Left cardiac atrium (tissue), 4 donors: ENCODE measurements at regions of chr2 and their contacts with region 1.

Region 1: DNA sequence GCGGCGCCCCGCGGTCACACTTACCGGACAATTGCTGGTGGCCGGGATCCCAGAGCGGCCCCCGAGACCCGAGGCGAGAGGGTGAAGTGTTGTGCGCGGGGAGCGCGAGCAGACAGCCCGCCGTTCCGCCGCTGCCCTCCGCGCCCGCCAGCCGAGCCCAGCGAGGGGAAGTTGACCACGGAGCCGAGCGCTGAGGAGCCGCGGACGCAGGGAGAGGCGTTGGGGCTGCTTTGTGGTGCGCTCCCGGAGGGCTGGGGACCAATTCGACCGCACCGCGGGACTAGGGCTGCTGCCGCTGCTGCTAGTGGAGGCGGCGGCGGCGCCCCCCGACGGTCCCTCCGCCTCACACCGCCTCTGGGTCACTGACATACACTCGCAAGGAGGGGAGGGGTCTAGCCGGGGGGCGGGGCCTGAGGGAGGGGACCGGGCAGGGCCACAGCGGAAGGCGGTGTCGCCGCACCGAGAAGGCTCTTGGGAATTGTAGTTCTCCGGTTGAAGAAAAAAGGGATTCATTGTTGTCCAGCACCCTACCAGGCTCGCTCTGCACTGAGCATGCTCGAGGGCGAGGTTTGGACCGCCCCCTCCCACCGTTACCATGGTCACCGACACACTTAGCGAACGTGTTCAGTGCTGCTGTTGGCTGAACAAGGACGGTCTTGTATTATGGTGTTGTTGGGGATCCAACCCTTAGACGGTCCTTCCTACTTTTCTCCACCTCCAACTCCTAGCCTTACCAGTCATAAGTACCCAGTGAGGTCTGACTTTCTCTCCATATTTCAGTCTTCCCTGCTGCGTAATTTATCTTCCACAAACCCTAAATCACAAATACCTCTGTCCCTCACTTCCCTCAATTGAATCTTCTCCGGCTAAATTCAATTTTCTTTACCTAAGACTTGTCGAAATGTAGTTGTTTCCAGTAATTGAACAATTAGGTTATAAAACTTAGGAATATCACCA is at the start of gene PELI1:
- DNase-seq: peak; percentile 97
- ATAC-seq: peak; percentile 99
- total RNA-seq, gene PELI1: 14.8 to 16.8 TPM

Region 2: GRCh38 chr2:62660582-62661262 is 1483.6 kb before region 1 on chr2:
- intact Hi-C with region 1: no loop called
- DNase-seq: no peak
- ATAC-seq: no peak

Region 3: GRCh38 chr2:64228126-64228678 is 83.9 kb after region 1 on chr2:
- intact Hi-C with region 1: loop called in 1 of 2 experiments (anchors 10 kb)
- DNase-seq: peak; percentile 91
- ATAC-seq: peak; percentile 96 to 98

Region 4: DNA sequence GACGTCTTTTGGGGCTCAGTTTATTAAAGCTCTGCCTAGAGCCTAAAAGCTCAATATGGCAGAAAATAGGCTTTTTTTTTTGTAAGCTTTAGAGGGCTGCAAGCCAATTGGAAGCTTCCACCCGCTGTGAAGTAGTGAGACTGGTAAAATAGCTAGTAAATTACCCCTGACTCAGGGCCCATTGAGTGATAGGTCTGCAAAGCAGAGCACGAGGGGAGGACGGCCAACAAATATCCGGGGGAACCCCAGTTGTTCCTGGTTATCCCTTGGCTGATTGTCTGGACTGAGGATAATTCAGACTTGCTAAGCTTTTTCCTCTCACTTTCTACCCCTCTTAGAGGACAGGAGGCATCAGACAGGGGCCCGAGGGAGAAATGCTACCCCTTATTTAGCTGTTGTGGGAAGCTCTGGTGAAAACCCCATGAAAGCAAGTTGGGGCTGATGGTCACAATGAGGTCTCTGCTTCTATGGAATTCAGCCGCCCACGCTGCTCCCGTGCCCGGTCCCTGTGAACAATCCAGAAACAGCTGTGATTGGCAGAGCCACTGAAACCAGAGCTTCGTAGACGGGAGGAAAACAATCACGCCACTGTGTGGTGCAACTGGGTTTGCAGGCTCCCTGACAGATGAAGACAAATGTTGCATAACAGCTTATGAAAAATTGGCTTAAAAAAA is 167.8 kb after region 1 on chr2:
- intact Hi-C with region 1: loop called in 1 of 2 experiments (anchors 5 kb)
- DNase-seq: peak; percentile 89
- ATAC-seq: peak; percentile 94 to 96